Mammary epithelial cell (primary cell): ENCODE measurements at regions of chr18 and their contacts with region 1.

Region 1: GRCh38 chr18:13710460-13710859 is 15.9 kb downstream of the FAM210A start:
- DNase-seq: peak; percentile 99
- H3K4me3 ChIP-seq: no peak overlapping the region
- H3K27ac ChIP-seq: peak overlapping the region; percentile 98
- H3K4me1 ChIP-seq: peaks cover 20% of the 10 kb centered on the region
- H3K27me3 ChIP-seq: no peaks in the 10 kb centered on the region
- CTCF ChIP-seq: no peak

Region 2: GRCh38 chr18:14978962-14979535 is 1268.6 kb after region 1 on chr18:
- CTCF ChIA-PET with region 1: no interaction called
- dilution Hi-C with region 1: no loop called
- in situ Hi-C with region 1: no loop called
- intact Hi-C with region 1: loop called (anchors 10 kb)
- DNase-seq: no peak
- H3K4me3 ChIP-seq: no peak overlapping the region
- H3K27ac ChIP-seq: no peak overlapping the region
- H3K4me1 ChIP-seq: peaks cover 5% of the 10 kb centered on the region
- H3K27me3 ChIP-seq: no peaks in the 10 kb centered on the region
- CTCF ChIP-seq: peak; percentile 23 to 45